ENCODE measurements at regions of chr3 and their contacts with region 1.

Region 1: GRCh38 chr3:141360888-141361598 is 7.3 kb upstream of the ZBTB38 start:
- DNase-seq: no peak
- ATAC-seq: peak; percentile 84

Region 2: GRCh38 chr3:141311496-141312353 is 49.3 kb before region 1 on chr3:
- intact Hi-C with region 1: loop called (anchors 10 kb)
- DNase-seq: peak; percentile 98
- ATAC-seq: peak; percentile 98

Region 3: GRCh38 chr3:141452036-141452435 is 91.0 kb after region 1 on chr3:
- intact Hi-C with region 1: loop called (anchors 2 kb)
- DNase-seq: no peak
- ATAC-seq: peak; percentile 71

Region 4: GRCh38 chr3:141998669-141999290 is 637.7 kb after region 1 on chr3:
- intact Hi-C with region 1: no loop called
- DNase-seq: no peak
- ATAC-seq: no peak